ENCODE measurements at regions of chr12 and their contacts with region 1.

Region 1: DNA sequence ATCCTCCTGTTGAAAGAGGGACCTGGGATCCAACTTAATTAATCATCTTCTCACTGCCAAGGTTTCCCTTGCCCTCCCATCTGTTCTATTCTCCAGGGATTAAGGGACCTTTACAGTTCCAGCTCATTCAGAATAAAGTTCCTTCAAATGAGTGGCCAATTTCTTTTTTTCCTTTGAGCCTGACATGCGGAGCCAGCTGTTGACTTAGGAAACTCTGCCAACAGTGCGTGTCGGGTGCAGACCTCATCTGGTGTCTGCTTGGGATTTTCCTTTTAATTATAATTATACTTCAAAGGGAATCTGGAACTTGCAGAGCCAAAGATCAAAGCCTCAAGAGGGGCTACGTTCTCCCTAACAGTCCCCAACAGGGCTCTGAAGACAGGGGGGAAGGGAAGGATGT is 64.8 kb downstream of the CCDC60 start:
- DNase-seq: no peak
- ATAC-seq: no peak
- H3K4me3 ChIP-seq: no peak overlapping the region
- H3K27ac ChIP-seq: no peak overlapping the region
- H3K4me1 ChIP-seq: no peaks in the 10 kb centered on the region
- H3K27me3 ChIP-seq: no peaks in the 10 kb centered on the region
- CTCF ChIP-seq: no peak
- POLR2A ChIP-seq: no peak
- RAD21 ChIP-seq: no peak

Region 2: GRCh38 chr12:119122751-119123150 is 276.6 kb before region 1 on chr12:
- CTCF ChIA-PET with region 1: no interaction called
- POLR2A ChIA-PET with region 1: no interaction called
- dilution Hi-C with region 1: no loop called
- in situ Hi-C with region 1: loop called (anchors 5 kb)
- intact Hi-C with region 1: no loop called
- DNase-seq: no peak
- ATAC-seq: no peak
- H3K4me3 ChIP-seq: no peak overlapping the region
- H3K27ac ChIP-seq: no peak overlapping the region
- H3K4me1 ChIP-seq: no peaks in the 10 kb centered on the region
- H3K27me3 ChIP-seq: no peaks in the 10 kb centered on the region
- CTCF ChIP-seq: no peak
- POLR2A ChIP-seq: no peak
- RAD21 ChIP-seq: no peak

Region 3: DNA sequence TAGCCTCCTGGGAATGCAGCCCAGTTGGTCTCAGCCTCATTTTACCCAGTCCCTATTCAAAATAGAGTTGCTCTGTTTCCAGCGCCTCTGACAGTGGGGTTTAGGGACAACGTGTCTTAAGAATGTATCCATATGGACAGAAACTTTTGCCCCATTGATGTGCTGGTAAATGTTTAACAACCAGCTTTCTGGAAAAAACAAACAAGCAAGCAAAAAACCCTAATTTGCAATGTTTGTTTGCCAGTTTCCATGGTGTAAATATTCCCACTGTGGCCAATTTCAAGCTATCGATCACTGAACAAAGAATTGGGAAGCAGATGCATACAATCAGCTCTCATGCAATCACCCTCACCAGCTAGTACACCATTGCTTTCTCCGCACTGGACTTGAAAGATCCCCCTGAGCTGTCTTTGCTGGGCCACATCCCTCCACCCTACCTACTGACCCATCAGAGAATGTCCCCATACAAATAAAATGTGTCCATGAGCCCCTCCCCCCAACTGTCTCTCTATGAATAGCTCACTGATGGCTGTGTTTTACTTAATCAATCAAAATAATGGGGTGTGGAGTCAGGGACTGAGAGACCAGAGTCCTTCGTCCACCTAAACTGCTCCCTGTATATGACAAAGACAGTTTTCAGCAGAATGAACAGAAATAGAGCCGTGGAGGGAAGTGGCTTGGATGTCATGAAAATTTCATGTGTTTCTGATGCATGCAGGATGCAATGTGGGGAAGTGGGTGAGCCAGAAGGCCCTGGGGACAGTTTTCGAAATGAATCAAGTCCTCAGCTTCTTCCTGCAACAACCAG is 24.0 kb before region 1 on chr12:
- CTCF ChIA-PET with region 1: no interaction called
- POLR2A ChIA-PET with region 1: no interaction called
- dilution Hi-C with region 1: no loop called
- in situ Hi-C with region 1: no loop called
- intact Hi-C with region 1: no loop called
- DNase-seq: no peak
- ATAC-seq: no peak
- H3K4me3 ChIP-seq: no peak overlapping the region
- H3K27ac ChIP-seq: no peak overlapping the region
- H3K4me1 ChIP-seq: no peaks in the 10 kb centered on the region
- H3K27me3 ChIP-seq: no peaks in the 10 kb centered on the region
- CTCF ChIP-seq: no peak
- POLR2A ChIP-seq: no peak
- RAD21 ChIP-seq: no peak

Region 4: GRCh38 chr12:119556854-119557253 is 157.6 kb after region 1 on chr12:
- CTCF ChIA-PET with region 1: no interaction called
- POLR2A ChIA-PET with region 1: no interaction called
- dilution Hi-C with region 1: no loop called
- in situ Hi-C with region 1: no loop called
- intact Hi-C with region 1: no loop called
- DNase-seq: no peak
- ATAC-seq: no peak
- H3K4me3 ChIP-seq: no peak overlapping the region
- H3K27ac ChIP-seq: no peak overlapping the region
- H3K4me1 ChIP-seq: no peaks in the 10 kb centered on the region
- H3K27me3 ChIP-seq: no peaks in the 10 kb centered on the region
- CTCF ChIP-seq: no peak
- POLR2A ChIP-seq: no peak
- RAD21 ChIP-seq: no peak

Measured in IMR-90 (cell line).